H1 (cell line): ENCODE measurements at regions of chr2 and their contacts with region 1.

Region 1: DNA sequence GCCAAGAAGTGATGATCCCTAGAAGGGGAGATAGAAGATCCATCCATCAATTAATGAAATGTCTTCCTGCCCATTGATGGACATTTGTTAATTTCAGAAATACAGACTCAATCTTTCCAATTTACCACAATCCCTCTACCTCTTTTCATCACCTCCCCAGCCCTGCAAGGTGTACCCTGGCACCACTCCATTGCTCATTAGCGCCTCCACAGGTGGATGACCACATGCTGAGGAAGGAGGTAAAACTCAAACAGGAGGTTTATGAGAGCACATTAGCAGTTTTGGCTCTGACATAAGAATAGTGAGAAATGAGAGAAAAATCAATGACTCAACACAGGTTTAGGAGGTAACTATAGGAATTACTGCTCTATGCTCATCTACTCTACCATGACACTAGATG is 208.0 kb downstream of the C1D start:
- DNase-seq: peak in 1 of 2 experiments; percentile 50
- H3K4me3 ChIP-seq: no peak overlapping the region
- H3K27ac ChIP-seq: no peak overlapping the region
- H3K4me1 ChIP-seq: no peaks in the 10 kb centered on the region
- H3K27me3 ChIP-seq: peaks cover 0 to 2% (median 0%) of the 10 kb centered on the region in 4 experiments; a peak in 1 of 7 replicates
- CTCF ChIP-seq: peak in 2 of 3 experiments; percentile 50 to 54; a peak in 3 of 4 replicates
- EP300 ChIP-seq: no peak
- POLR2A ChIP-seq: no peak
- RAD21 ChIP-seq: peak in 1 of 2 experiments; percentile 34; a peak in 2 of 4 replicates

Region 2: DNA sequence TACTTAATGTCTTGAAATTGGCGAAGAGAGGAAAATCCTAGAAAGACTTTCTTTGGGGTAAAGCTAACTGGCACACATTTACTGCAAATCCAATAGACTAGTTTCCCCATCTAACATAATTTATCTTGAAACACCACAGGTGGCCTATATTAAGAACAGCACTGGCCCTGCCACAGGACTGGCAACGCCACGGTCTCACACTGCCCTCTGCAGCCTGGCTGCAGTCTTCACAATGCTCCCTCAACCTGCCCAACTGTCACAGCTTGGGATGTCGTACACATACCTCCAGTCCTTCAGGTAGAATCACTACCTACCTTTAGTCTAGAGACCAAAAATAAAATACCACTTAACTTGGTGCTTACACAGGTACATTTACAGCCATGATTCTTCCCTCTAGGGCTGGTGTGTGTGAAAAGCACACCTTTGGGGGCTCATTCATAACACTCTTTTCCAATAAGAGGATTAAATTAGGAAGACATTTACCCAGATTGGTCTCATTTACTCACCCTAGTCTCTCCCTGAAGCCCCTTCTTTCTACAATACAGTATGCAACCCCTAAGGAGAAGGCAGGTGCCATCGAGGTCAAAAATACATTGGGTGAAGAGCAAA is 14.2 kb before region 1 on chr2:
- CTCF ChIA-PET with region 1: interaction called, 23 read pairs
- POLR2A ChIA-PET with region 1: interaction called, 3 read pairs
- DNase-seq: peak; percentile 39 to 68
- H3K4me3 ChIP-seq: no peak overlapping the region
- H3K27ac ChIP-seq: no peak overlapping the region
- H3K4me1 ChIP-seq: peaks cover 0 to 2% (median 0%) of the 10 kb centered on the region in 4 experiments; a peak in 1 of 7 replicates
- H3K27me3 ChIP-seq: no peaks in the 10 kb centered on the region
- CTCF ChIP-seq: peak; percentile 86 to 96 (median 95)
- EP300 ChIP-seq: no peak
- POLR2A ChIP-seq: no peak
- RAD21 ChIP-seq: peak; percentile 98 to 99

Region 3: DNA sequence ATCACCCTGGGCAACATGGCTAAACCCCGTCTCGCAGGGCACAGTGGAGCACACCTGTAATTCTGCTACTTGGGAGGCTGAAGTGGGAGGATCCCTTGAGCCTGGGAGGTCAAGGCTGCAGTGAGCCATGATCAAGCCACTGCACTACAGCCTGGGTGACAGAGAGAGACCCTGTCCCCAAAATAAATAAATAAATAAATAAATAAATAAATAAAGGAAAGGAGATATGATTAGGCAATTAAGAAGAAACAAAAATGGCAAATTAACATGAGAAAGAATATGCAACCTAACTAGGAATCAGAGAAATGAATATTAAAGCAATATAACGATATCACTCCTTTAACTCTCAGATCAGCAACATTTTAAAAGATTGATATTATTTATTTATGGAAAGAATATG is 115.7 kb after region 1 on chr2:
- CTCF ChIA-PET with region 1: no interaction called
- POLR2A ChIA-PET with region 1: no interaction called
- DNase-seq: no peak
- H3K4me3 ChIP-seq: no peak overlapping the region
- H3K27ac ChIP-seq: no peak overlapping the region
- H3K4me1 ChIP-seq: no peaks in the 10 kb centered on the region
- H3K27me3 ChIP-seq: no peaks in the 10 kb centered on the region
- CTCF ChIP-seq: no peak
- EP300 ChIP-seq: no peak
- POLR2A ChIP-seq: no peak
- RAD21 ChIP-seq: no peak